Posterior cingulate gyrus (tissue), 11 donors: ENCODE measurements at regions of chr5 and their contacts with region 1.

Region 1: GRCh38 chr5:160418561-160419457 is at the start of gene SLU7:
- DNase-seq: peak; percentile 85 to 98 (median 89)

Region 2: DNA sequence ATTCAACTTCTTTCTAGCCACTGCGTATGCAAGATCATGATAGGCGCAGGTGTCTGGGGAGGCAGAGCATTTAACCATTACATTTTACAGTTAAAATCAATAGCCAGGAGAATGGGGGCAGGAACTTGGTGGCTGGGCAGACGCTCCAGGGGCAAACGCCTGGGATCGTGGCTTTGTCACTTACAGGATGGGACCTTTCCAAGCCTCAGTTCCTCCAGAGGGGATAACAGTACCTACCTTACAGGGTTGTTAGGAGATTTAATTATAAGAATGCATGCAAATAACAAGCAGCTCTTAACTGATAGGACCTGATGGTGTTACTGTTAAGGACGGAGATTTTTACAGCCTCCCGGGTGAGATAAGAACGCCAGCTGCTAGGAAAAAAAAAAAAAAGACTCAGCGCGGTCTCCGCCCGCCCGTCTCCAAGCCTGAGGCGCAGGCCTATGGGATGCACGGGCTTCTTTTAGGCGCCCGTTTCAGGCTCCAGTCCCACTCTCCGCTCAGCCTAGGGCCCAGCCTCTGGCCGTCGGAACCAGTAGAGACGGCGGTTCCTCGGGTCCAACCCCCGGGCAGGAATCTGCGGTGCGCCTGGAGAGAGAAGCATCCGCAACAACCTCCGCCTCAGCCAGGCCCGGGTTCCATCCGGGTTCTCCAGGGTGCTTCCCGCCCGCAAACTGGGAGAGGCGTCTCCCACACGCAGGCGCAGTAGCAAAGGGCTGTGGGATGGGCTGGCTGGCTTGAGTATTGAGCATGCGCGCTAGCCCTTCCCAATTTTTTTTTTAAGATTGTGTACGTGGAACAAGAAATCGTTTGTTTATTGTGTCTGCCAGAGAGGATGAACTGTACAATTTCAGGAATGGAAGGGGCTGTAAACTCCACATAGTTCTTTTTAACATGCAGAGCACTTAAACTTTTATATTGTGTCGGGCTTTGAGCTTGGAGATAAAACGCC is 19.1 kb before region 1 on chr5 and contains the start of gene FAM200C:
- intact Hi-C with region 1: loop called (anchors 2 kb)
- DNase-seq: peak; percentile 88 to 99 (median 91)